Calu3 (cell line): ENCODE measurements at regions of chr3 and their contacts with region 1.

Region 1: DNA sequence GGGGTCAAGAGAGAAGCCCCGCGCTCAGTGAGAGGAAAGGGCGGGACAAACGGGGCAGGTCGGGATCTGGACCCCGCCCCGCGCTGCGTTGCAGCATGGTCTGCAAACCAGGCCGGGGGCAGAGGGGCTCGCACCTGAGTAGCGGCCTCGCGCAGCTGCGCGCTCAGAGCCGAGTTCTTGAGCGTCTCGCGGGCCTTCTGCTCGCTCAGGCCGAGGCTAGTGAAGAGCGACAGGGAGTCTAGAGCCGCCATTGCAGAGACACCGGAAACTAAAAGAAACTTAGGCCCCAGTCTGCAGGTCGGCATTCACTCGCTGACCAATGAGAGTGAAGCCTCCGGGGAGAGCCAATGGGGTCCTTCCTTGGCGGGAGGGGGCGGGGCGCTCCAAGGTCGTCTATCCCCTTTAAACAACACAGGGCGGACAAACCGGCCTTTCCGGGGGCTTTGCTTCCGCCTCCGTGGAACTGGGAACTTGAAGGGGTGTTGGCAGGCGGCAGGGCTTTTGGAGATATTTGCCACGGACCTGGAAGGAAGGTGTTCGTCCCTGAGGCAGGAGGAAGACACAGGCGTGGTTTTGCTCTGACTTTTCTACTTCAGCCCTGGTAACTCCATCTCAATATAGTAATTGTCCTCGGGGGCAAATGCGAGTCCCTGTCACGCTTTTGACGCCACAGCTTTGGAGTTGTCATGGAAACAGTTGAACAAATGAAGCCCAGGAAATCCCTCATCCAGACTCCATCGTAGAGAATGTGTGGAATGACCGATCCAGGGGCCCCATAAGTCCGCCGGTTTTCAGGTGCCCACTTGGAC is at the start of gene QARS1:
- DNase-seq: peak; percentile 92
- H3K4me3 Mint-ChIP-seq: peak within 1 kb of the TSS; percentile 98
- H3K27ac Mint-ChIP-seq: peak within 1 kb of the TSS; percentile 91
- H3K4me1 Mint-ChIP-seq: peaks cover 10% of the 10 kb centered on the region
- H3K27me3 Mint-ChIP-seq: no peaks in the 10 kb centered on the region
- CTCF ChIP-seq: no peak
- total RNA-seq, gene QARS1: 179 and 248 TPM in 2 replicates

Region 2: DNA sequence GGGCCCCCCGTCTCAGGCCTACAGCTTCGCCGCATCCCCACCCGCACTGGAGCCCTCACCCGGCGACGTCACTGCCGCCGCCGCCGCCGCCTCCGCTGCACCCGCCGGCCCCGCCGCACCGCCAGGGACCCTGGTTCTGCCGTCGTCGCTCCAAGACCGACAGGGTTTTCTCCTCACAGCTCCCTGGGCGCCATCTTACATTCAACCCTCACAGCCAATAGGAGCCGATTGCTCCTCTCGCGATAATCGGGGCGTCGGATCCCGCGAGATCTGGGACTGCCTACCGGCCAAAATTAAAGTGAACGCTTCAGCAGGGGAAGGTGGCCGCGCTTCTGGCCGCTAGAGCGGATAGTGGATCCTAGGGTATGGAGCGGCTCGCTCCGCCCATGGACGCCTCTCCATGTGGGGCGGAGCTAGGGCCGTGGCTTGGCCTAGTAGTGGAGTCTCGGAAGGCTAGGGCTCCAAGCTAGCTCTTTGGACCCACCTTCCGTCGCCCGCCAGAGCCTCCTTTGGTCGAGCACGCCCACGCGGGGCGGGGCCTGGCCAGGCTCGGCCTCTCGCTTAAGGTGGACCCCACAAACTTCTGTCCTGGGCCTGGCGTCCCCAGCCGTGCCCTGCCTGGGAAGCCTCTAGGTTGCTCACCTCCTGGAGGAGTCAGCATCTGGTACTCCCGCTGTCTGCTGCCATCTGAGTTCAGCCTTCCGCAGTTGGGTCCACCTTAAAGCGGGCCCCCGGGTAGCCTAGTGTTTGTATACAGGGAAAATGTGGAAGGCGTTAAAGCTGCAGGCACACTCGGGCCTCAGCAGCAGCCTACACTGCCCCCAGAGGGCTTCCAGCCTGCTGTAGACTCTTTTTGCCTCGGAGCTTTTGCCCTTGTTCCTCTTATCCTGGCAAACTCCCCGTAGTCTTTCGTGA is 10.6 kb before region 1 on chr3 and contains the start of gene QRICH1:
- CTCF ChIA-PET with region 1: interaction called, 12 read pairs
- intact Hi-C with region 1: no loop called
- DNase-seq: peak; percentile 96
- H3K4me3 Mint-ChIP-seq: peak within 1 kb of the TSS; percentile 95
- H3K27ac Mint-ChIP-seq: peak within 1 kb of the TSS; percentile 99
- H3K4me1 Mint-ChIP-seq: no peaks in the 10 kb centered on the region
- H3K27me3 Mint-ChIP-seq: no peaks in the 10 kb centered on the region
- CTCF ChIP-seq: no peak
- total RNA-seq, gene QRICH1: 97.8 and 107 TPM in 2 replicates

Region 3: GRCh38 chr3:49133226-49133951 is 28.7 kb after region 1 on chr3:
- CTCF ChIA-PET with region 1: no interaction called
- intact Hi-C with region 1: no loop called
- DNase-seq: peak; percentile 80
- H3K4me3 Mint-ChIP-seq: peak overlapping the region; percentile 81
- H3K27ac Mint-ChIP-seq: peak overlapping the region; percentile 86
- H3K4me1 Mint-ChIP-seq: peaks cover 24% of the 10 kb centered on the region
- H3K27me3 Mint-ChIP-seq: no peaks in the 10 kb centered on the region
- CTCF ChIP-seq: no peak